CD4-positive, alpha-beta T cell (primary cell): ENCODE measurements at regions of chr14 and their contacts with region 1.

Region 1: DNA sequence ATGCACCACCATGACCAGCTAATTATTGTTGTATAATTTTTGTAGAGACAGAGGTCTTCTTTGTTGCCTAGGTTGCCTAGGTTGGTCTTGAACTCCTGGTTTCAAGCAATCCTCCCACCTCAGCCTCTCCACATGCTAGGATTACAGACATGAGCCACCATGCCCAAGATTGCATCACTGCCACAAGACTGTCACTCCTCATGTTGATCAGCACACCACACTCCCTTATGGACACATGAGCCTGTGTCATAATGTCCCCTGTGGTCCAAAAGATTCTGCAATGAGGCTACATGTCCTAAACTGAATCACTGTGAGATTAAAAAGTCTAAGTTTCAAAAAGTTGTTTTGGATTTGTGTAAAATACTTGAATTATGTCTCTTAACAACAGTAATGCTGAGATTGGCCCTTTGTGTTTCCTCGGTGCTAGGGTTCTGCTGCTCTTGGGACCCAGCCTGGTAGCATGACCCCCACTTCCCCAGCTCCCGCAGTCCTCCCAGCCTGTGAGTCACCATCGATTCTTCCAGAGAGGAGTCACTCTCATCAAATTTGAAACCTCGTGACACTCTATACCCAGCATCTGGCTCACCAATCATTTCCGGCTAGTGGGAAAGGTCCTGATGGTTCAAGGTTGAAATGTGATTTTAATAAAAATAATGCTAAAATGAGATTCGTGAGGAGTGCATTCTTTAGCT is 890.9 kb downstream of the VRK1 start:
- DNase-seq: no peak
- ATAC-seq: no peak
- H3K4me3 ChIP-seq: no peak overlapping the region
- H3K4me3 Mint-ChIP-seq: no peak overlapping the region
- H3K27ac ChIP-seq: no peak overlapping the region
- H3K27ac Mint-ChIP-seq: no peak overlapping the region
- H3K4me1 ChIP-seq: peaks cover 9% of the 10 kb centered on the region
- H3K4me1 Mint-ChIP-seq: peaks cover 23% of the 10 kb centered on the region
- H3K27me3 ChIP-seq: no peaks in the 10 kb centered on the region
- H3K27me3 Mint-ChIP-seq: no peaks in the 10 kb centered on the region
- CTCF ChIP-seq: no peak

Region 2: GRCh38 chr14:97618917-97619690 is 69.0 kb before region 1 on chr14:
- CTCF ChIA-PET with region 1: no interaction called
- POLR2A ChIA-PET with region 1: no interaction called
- intact Hi-C with region 1: no loop called
- DNase-seq: peak in 3 of 14 experiments; percentile 18 to 38 (median 28)
- ATAC-seq: peak; percentile 47
- H3K4me3 ChIP-seq: no peak overlapping the region
- H3K4me3 Mint-ChIP-seq: peak overlapping the region; percentile 87
- H3K27ac ChIP-seq: peak overlapping the region; percentile 16 to 42
- H3K27ac Mint-ChIP-seq: peak overlapping the region; percentile 94
- H3K4me1 ChIP-seq: peaks cover 20% of the 10 kb centered on the region
- H3K4me1 Mint-ChIP-seq: peaks cover 52% of the 10 kb centered on the region
- H3K27me3 ChIP-seq: no peaks in the 10 kb centered on the region
- H3K27me3 Mint-ChIP-seq: no peaks in the 10 kb centered on the region
- CTCF ChIP-seq: no peak

Region 3: GRCh38 chr14:98059106-98059505 is 371.0 kb after region 1 on chr14:
- CTCF ChIA-PET with region 1: no interaction called
- POLR2A ChIA-PET with region 1: no interaction called
- intact Hi-C with region 1: loop called in 1 of 2 experiments (anchors 5 kb)
- DNase-seq: no peak
- ATAC-seq: no peak
- H3K4me3 ChIP-seq: no peak overlapping the region
- H3K4me3 Mint-ChIP-seq: no peak overlapping the region
- H3K27ac ChIP-seq: no peak overlapping the region
- H3K27ac Mint-ChIP-seq: no peak overlapping the region
- H3K4me1 ChIP-seq: no peaks in the 10 kb centered on the region
- H3K4me1 Mint-ChIP-seq: no peaks in the 10 kb centered on the region
- H3K27me3 ChIP-seq: no peaks in the 10 kb centered on the region
- H3K27me3 Mint-ChIP-seq: no peaks in the 10 kb centered on the region
- CTCF ChIP-seq: no peak